ENCODE measurements at regions of chr13 and their contacts with region 1.

Region 1: GRCh38 chr13:23741879-23742510 is 147.2 kb downstream of the MIPEP start:
- DNase-seq: no peak
- CTCF ChIP-seq: peak; percentile 24

Region 2: DNA sequence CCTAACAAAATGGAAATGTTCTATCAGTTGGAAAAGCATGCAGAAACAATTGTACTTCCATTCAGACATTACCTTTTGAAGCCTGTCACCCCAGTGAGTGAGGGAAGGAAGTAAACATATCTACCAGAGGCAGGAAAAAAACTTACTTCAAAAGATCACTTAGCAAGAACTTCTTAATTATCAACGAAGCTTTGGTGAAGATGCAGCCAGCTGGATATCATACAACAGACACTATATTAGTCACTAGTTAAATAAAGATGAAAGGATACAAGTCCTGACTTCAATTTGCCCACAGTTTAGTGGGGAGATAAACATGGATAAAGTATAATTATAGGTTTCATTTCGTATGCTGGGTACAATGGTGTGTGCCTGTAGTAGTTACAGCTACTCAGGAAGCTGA is 23.0 kb before region 1 on chr13:
- CTCF ChIA-PET with region 1: interaction called, 11 read pairs
- POLR2A ChIA-PET with region 1: no interaction called
- DNase-seq: no peak
- CTCF ChIP-seq: no peak

Region 3: DNA sequence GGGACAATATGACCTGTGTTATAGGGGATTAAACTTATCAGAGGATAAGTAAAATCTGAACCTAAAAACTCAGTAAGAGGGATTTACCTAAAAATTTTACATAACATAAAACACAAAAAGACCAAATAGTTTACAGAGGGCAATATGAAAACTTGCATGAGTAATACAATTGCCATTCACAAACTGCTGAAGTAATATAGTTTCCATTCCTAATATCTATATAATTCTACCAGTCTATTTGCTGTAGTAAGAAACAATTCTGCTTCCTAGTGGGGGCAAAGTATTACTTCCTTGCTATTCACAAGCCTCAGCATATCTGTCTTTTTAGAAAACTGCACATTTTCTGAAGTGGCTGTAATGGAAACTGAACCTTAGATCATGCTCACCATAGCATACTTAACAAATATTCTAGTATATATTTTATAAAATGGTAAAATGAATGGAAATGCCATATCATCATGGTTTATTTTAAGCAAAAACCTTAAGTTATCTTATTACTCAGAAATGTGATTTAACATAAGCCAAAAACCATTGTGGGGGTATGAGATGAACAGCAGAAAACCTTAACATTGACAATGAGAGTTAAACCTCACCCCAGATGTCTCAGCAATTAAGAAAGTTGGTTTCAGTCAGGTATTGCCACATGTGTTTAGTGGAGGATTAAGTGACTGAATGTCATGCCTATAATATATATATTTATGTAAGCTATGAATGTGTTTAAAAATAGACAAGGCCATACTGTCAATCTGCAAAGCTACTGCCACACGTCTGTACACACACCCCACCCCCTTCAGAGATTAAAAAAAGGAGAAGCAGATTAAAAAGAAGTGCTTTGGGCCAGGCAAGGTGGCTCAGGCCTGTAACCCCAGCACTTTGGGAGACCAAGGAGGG is 10.4 kb after region 1 on chr13:
- CTCF ChIA-PET with region 1: interaction called, 12 read pairs
- POLR2A ChIA-PET with region 1: no interaction called
- DNase-seq: peak; percentile 21
- CTCF ChIP-seq: no peak

Region 4: GRCh38 chr13:23969647-23970046 is 227.7 kb after region 1 on chr13:
- CTCF ChIA-PET with region 1: no interaction called
- POLR2A ChIA-PET with region 1: no interaction called
- DNase-seq: no peak
- CTCF ChIP-seq: no peak